ENCODE measurements at regions of chr1 and their contacts with region 1.

Region 1: DNA sequence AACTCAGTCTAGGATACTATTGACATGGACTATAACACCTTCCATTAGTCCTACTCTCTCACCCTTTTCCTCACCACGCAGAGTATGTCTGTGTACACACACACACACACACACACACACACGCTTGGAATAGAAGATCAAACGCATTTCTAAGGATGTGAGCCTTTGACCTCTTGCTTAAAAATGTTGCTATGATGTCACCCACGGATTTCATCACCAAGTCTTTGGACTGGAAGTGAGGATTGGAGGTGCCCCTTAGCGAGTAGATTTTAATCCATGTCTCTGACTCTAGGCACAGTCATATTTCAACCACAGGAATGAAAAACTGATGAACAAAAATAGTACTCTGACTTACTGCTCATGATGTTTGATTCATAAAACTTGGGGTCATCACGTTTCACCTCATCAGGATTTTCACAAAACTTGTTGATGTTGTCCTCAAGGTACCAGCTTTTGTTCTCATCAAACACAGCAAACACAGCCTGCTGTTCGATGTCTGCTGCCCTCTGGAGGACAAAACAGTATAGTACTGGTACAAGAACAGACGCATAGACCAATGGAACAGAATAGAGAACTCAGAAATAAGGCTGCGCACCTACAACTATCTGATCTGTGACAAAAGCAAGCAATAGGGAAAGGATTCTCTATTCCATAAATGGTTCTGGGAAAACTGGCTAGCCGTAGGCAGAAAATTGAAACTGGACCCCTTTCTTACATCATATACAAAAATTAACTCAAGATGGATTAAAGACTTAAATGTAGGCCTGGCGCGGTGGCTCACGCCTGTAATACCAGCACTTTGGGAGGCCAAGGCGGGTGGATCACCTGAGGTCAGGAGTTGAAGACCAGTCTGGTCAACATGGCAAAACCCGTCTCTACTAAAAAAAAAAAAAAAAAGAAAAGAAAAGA is 39.9 kb downstream of the F5 start:
- DNase-seq: peak; percentile 49 to 62 (median 57)
- H3K4me3 ChIP-seq: no peak overlapping the region
- H3K4me3 Mint-ChIP-seq: no peak overlapping the region
- H3K27ac ChIP-seq: no peak overlapping the region
- H3K27ac Mint-ChIP-seq: no peak overlapping the region
- H3K4me1 ChIP-seq: no peaks in the 10 kb centered on the region
- H3K4me1 Mint-ChIP-seq: no peaks in the 10 kb centered on the region
- H3K27me3 ChIP-seq: no peaks in the 10 kb centered on the region
- H3K27me3 Mint-ChIP-seq: no peaks in the 10 kb centered on the region
- CTCF ChIP-seq: peak; percentile 77

Region 2: GRCh38 chr1:168603501-168604110 is 942.7 kb before region 1 on chr1:
- intact Hi-C with region 1: loop called (anchors 5 kb)
- DNase-seq: peak; percentile 18 to 48 (median 29)
- H3K4me3 ChIP-seq: no peak overlapping the region
- H3K4me3 Mint-ChIP-seq: no peak overlapping the region
- H3K27ac ChIP-seq: no peak overlapping the region
- H3K27ac Mint-ChIP-seq: peak overlapping the region in 1 of 7 donors; percentile 77
- H3K4me1 ChIP-seq: no peaks in the 10 kb centered on the region
- H3K4me1 Mint-ChIP-seq: no peaks in the 10 kb centered on the region
- H3K27me3 ChIP-seq: no peaks in the 10 kb centered on the region
- H3K27me3 Mint-ChIP-seq: peaks cover 0 to 2% (median 0%) of the 10 kb centered on the region in 3 donors
- CTCF ChIP-seq: peak; percentile 66

Region 3: DNA sequence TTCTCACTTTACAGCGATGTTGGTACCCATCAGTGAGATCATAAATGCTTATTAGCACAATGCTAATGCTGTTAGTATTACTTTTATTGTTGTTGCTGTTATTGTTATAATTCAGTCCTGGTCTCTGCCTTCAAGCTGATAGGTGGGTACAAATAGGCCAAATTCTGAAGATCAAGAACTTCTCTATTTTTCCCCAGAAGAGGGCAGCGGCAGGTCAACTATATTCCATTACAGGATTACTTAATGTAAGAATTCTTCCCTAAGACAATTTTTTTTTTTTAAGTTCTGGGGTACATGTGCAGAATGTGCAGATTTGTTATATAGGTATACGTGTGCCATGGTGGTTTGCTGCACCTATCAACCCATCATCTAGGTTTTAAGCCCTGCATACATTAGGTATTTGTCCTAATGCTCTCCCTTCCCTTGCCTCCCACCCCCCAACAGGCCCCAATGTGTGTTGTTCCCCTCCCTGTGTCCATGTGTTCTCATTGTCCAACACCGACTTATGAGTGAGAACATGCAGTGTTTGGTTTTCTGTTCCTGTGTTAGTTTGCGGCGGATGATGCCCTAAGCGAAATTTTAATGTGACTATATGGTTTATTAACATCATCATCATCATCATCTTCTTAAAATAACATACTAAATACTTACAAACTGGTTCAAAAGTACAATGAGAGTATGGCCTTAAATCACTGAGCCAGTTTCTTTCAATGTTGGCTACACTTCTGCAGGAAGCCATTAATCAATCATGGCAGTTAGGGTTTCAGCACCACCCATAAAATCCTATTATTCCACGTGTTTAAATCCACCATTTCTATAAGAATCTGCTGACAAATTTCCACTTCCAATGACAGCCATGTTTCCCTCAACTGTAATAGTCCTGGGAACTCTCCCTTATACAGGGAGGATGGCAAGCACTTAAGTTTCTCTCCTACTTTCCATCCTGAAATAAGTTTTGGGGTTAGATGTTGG is 79.8 kb before region 1 on chr1:
- intact Hi-C with region 1: loop called (anchors 5 to 10 kb)
- DNase-seq: peak in 2 of 3 donors; percentile 12 to 18
- H3K4me3 ChIP-seq: no peak overlapping the region
- H3K4me3 Mint-ChIP-seq: no peak overlapping the region
- H3K27ac ChIP-seq: no peak overlapping the region
- H3K27ac Mint-ChIP-seq: peak overlapping the region in 1 of 7 donors; percentile 25
- H3K4me1 ChIP-seq: no peaks in the 10 kb centered on the region
- H3K4me1 Mint-ChIP-seq: no peaks in the 10 kb centered on the region
- H3K27me3 ChIP-seq: no peaks in the 10 kb centered on the region
- H3K27me3 Mint-ChIP-seq: peaks cover 0 to 2% (median 0%) of the 10 kb centered on the region in 3 donors
- CTCF ChIP-seq: peak; percentile 35

Region 4: DNA sequence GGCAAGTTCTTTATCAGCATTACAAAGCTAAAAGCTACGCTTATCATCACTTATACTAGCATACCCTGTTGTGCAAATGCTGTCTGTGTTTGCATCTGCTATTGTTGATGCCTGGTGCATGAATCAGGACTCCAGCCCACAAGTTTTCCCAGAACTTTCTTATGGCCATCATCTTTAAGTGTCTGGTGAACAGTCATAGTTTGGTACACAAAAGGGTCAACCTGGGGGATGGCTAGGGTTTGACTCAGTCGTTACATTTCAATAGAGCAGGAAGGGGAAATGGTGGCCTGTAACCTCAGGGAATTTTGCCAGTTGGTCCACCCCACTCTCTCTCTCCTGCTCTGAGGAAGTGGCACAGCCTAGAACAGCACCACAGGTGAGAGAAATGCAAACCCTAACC is 129.7 kb after region 1 on chr1:
- intact Hi-C with region 1: no loop called
- DNase-seq: no peak
- H3K4me3 ChIP-seq: peak overlapping the region in 1 of 3 experiments; percentile 15
- H3K4me3 Mint-ChIP-seq: no peak overlapping the region
- H3K27ac ChIP-seq: peak overlapping the region in 1 of 2 donors; percentile 32
- H3K27ac Mint-ChIP-seq: peak overlapping the region in 3 of 7 donors; percentile 7 to 45 (median 19)
- H3K4me1 ChIP-seq: peaks cover 13 to 20% of the 10 kb centered on the region in 2 donors
- H3K4me1 Mint-ChIP-seq: peaks cover 22% of the 10 kb centered on the region
- H3K27me3 ChIP-seq: no peaks in the 10 kb centered on the region
- H3K27me3 Mint-ChIP-seq: peaks cover 0 to under 1% (median 0%) of the 10 kb centered on the region in 3 donors
- CTCF ChIP-seq: no peak

Region 5: GRCh38 chr1:169809370-169810095 is 263.2 kb after region 1 on chr1:
- intact Hi-C with region 1: loop called (anchors 5 to 10 kb)
- DNase-seq: peak; percentile 27 to 52 (median 37)
- H3K4me3 ChIP-seq: no peak overlapping the region
- H3K4me3 Mint-ChIP-seq: no peak overlapping the region
- H3K27ac ChIP-seq: no peak overlapping the region
- H3K27ac Mint-ChIP-seq: peak overlapping the region in 1 of 7 donors; percentile 68
- H3K4me1 ChIP-seq: no peaks in the 10 kb centered on the region
- H3K4me1 Mint-ChIP-seq: no peaks in the 10 kb centered on the region
- H3K27me3 ChIP-seq: no peaks in the 10 kb centered on the region
- H3K27me3 Mint-ChIP-seq: peaks cover 0 to 2% (median 0%) of the 10 kb centered on the region in 3 donors
- CTCF ChIP-seq: peak; percentile 76

Region 6: DNA sequence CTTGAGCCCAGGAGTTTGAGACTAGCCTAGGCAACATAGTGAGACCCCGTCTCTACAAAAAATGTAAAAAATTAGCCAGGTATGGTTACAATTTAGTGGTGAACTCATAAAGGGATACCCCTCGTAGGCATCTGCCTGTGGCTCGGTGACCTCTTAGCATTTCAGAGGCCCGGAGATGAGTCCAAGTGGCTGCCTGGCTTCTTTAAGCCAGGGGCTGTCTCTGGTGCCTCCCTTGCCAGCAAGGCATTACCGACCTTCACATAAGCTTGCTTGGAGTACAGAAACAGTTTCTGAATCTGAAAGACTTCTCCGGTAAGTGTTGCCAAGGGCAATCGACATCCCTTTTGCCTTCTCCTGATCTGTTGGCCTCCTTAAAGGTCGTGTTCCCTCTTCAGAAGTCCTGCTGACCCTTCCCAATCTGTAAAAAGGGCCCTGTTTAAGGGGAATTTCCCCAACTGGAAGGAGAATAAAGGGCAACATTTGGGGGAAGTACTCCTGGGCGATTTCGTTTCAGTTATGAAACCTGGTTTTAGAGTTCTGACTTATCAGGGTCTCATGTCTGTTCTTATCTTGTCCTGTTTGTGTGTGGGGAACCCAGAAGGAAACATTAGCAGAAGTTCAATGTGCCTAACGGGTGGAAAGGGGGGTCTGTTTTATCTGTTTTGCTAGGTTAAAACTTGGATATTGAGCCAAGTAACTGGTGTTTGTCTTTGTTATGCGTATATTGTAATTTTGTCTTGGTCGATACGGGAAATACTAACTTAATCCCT is 495.3 kb after region 1 on chr1:
- intact Hi-C with region 1: no loop called
- DNase-seq: no peak
- H3K4me3 ChIP-seq: no peak overlapping the region
- H3K4me3 Mint-ChIP-seq: no peak overlapping the region
- H3K27ac ChIP-seq: no peak overlapping the region
- H3K27ac Mint-ChIP-seq: peak overlapping the region in 1 of 7 donors; percentile 25
- H3K4me1 ChIP-seq: no peaks in the 10 kb centered on the region
- H3K4me1 Mint-ChIP-seq: no peaks in the 10 kb centered on the region
- H3K27me3 ChIP-seq: no peaks in the 10 kb centered on the region
- H3K27me3 Mint-ChIP-seq: no peaks in the 10 kb centered on the region
- CTCF ChIP-seq: no peak